GM23248 (cell line): ENCODE measurements at regions of chr2 and their contacts with region 1.

Region 1: DNA sequence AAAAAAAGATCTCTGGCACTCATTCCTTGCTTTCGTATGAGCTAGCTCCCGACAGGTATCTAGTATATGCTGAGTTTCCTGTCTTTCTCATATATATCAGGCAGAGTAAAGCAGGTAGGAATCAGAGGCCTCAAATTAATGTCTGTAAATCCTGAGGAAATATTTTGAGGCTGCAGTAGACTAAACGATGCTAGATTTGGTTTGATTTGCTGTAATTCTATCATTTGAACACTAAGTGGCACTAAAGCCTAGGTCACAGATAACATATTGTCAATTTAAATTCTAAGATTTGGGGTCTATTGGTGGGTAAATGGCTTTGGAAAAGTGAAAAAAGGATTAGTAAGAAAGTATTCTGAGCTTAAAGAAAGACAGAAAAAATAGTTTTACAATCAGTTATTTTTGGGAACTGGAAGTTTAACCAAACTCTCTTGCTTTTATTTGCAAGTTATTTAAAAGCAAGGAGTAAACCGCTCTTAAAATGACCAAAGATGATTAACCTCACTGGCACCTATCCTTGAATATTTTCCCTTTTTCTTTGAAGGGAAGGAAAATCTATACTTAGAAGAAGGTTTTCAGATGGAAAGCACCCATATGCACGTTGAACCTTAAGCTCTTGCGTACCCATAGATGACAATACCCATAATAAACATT is 37.6 kb upstream of the SLC4A10 start:
- DNase-seq: peak; percentile 51
- H3K4me3 ChIP-seq: no peak overlapping the region
- H3K27ac ChIP-seq: no peak overlapping the region
- H3K4me1 ChIP-seq: no peaks in the 10 kb centered on the region
- H3K27me3 ChIP-seq: peaks cover 8% of the 10 kb centered on the region; the same call in 1 of the 2 replicates

Region 2: GRCh38 chr2:161703863-161704262 is 117.2 kb after region 1 on chr2:
- in situ Hi-C with region 1: no loop called
- DNase-seq: no peak
- H3K4me3 ChIP-seq: no peak overlapping the region
- H3K27ac ChIP-seq: no peak overlapping the region
- H3K4me1 ChIP-seq: peaks cover 7% of the 10 kb centered on the region; the same call in 1 of the 2 replicates
- H3K27me3 ChIP-seq: no peaks in the 10 kb centered on the region

Region 3: GRCh38 chr2:161946489-161947107 is 360.0 kb after region 1 on chr2:
- in situ Hi-C with region 1: loop called (anchors 25 kb)
- DNase-seq: peak; percentile 58
- H3K4me3 ChIP-seq: no peak overlapping the region
- H3K27ac ChIP-seq: no peak overlapping the region
- H3K4me1 ChIP-seq: no peaks in the 10 kb centered on the region
- H3K27me3 ChIP-seq: peaks cover 11% of the 10 kb centered on the region; the same call in 1 of the 2 replicates

Region 4: GRCh38 chr2:162123806-162124758 is 537.4 kb after region 1 on chr2:
- in situ Hi-C with region 1: loop called (anchors 10 kb)
- DNase-seq: peak; percentile 54
- H3K4me3 ChIP-seq: no peak overlapping the region
- H3K27ac ChIP-seq: no peak overlapping the region
- H3K4me1 ChIP-seq: peaks cover 8% of the 10 kb centered on the region; the same call in 1 of the 2 replicates
- H3K27me3 ChIP-seq: no peaks in the 10 kb centered on the region

Region 5: GRCh38 chr2:162318328-162319180 is 731.9 kb after region 1 on chr2 and contains the start of gene IFIH1:
- in situ Hi-C with region 1: loop called (anchors 25 kb)
- DNase-seq: peak; percentile 94
- H3K4me3 ChIP-seq: peak within 1 kb of the TSS; percentile 88
- H3K27ac ChIP-seq: peak within 1 kb of the TSS; percentile 33
- H3K4me1 ChIP-seq: no peaks in the 10 kb centered on the region; the same call in 1 of the 2 replicates
- H3K27me3 ChIP-seq: no peaks in the 10 kb centered on the region
- total RNA-seq, gene IFIH1: 1.6 and 2.0 TPM in 2 replicates